Mammary epithelial cell (primary cell): ENCODE measurements at regions of chr13 and their contacts with region 1.

Region 1: GRCh38 chr13:19927117-19927748 is 31.3 kb upstream of the ZMYM2 start:
- DNase-seq: peak; percentile 38
- H3K4me3 ChIP-seq: no peak overlapping the region
- H3K27ac ChIP-seq: no peak overlapping the region
- H3K4me1 ChIP-seq: no peaks in the 10 kb centered on the region
- H3K27me3 ChIP-seq: no peaks in the 10 kb centered on the region
- CTCF ChIP-seq: peak; percentile 64 to 73

Region 2: DNA sequence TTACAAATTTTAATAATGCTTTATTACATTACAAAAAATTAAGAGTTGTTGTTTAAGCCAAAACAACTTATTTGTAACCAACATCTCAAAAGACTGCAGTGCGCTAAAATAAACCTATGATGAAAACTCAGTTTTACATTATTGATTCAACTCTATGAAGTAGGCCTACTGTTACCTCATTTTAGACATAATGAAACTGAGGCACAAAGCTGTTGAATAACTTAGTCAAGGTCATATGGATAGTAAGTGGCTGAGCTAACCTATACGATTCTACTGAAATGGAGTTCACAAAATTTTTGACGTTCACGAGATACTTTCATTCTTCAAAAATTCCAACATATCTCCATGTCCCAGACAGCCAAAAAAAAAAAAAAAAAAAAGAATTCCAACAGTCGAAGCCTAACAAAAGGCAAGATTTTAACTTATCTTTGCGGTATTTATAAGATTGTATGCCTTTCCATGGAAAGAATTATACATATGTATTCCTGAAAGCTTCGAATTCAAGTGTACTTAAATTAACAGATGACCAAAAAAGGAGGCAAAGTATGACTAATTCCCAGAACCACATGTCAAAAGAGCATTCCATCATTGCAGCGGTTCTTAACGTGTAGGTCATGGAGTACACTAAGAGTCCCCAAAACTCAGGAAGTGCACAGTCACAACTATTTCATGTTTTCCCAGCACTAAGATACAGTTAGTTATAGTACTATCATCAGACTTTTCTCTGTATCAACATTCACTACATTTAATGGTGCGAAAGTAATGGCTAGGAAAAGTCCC is 213.9 kb before region 1 on chr13:
- CTCF ChIA-PET with region 1: no interaction called
- dilution Hi-C with region 1: no loop called
- in situ Hi-C with region 1: no loop called
- intact Hi-C with region 1: no loop called
- DNase-seq: peak; percentile 32
- H3K4me3 ChIP-seq: no peak overlapping the region
- H3K27ac ChIP-seq: no peak overlapping the region
- H3K4me1 ChIP-seq: no peaks in the 10 kb centered on the region
- H3K27me3 ChIP-seq: no peaks in the 10 kb centered on the region
- CTCF ChIP-seq: no peak

Region 3: GRCh38 chr13:19818210-19818842 is 108.9 kb before region 1 on chr13:
- CTCF ChIA-PET with region 1: no interaction called
- dilution Hi-C with region 1: loop called (anchors 10 kb)
- in situ Hi-C with region 1: no loop called
- intact Hi-C with region 1: no loop called
- DNase-seq: no peak
- H3K4me3 ChIP-seq: no peak overlapping the region
- H3K27ac ChIP-seq: no peak overlapping the region
- H3K4me1 ChIP-seq: no peaks in the 10 kb centered on the region
- H3K27me3 ChIP-seq: no peaks in the 10 kb centered on the region
- CTCF ChIP-seq: peak; percentile 50 to 60

Region 4: GRCh38 chr13:19959831-19960652 is 32.8 kb after region 1 on chr13:
- CTCF ChIA-PET with region 1: interaction called, 5 read pairs
- dilution Hi-C with region 1: no loop called
- in situ Hi-C with region 1: no loop called
- intact Hi-C with region 1: loop called (anchors 1 kb)
- DNase-seq: peak; percentile 84
- H3K4me3 ChIP-seq: peak overlapping the region; percentile 60 to 96 (median 94)
- H3K27ac ChIP-seq: peak overlapping the region; percentile 78
- H3K4me1 ChIP-seq: peaks cover 23% of the 10 kb centered on the region
- H3K27me3 ChIP-seq: no peaks in the 10 kb centered on the region
- CTCF ChIP-seq: peak; percentile 93 to 96